Heart left ventricle (tissue), 16 donors: ENCODE measurements at regions of chr18 and their contacts with region 1.

Region 1: GRCh38 chr18:37537868-37538525 is 27.6 kb downstream of the CELF4 start:
- DNase-seq: peak; percentile 69 to 86 (median 76)
- ATAC-seq: peak; percentile 71 to 89 (median 76)
- H3K4me3 ChIP-seq: no peak overlapping the region
- H3K27ac ChIP-seq: no peak overlapping the region
- H3K4me1 ChIP-seq: peaks cover 0 to 6% (median 0%) of the 10 kb centered on the region in 12 donors
- H3K27me3 ChIP-seq: peaks cover 2 to 67% (median 18%) of the 10 kb centered on the region in 9 donors
- CTCF ChIP-seq: peak; percentile 74 to 90 (median 84)
- POLR2A ChIP-seq: no peak

Region 2: DNA sequence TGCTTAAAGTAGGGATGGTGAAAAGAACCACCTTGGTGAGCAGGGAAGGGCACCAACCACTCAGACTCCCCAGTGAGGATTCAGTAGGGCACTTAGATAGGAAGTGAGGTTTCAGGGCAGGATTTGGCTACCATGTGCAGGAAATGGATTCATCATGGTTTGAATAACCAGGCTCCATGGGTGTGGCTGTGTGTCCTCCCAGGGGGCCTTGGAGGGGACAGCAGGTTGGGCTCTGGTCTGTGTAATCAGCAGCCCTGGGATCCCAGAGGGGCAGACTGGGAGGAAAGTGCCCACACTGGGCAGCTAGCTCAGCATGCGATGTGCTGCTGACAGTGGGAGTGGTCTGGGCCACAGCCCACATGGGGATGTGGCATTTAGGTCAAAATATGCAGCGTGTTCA is 197.0 kb before region 1 on chr18:
- intact Hi-C with region 1: loop called in 6 of 10 experiments (anchors 1 to 10 kb)
- DNase-seq: no peak
- ATAC-seq: no peak
- H3K4me3 ChIP-seq: no peak overlapping the region
- H3K27ac ChIP-seq: no peak overlapping the region
- H3K4me1 ChIP-seq: no peaks in the 10 kb centered on the region
- H3K27me3 ChIP-seq: peaks cover 0 to 26% (median 0%) of the 10 kb centered on the region in 9 donors
- CTCF ChIP-seq: no peak
- POLR2A ChIP-seq: no peak

Region 3: DNA sequence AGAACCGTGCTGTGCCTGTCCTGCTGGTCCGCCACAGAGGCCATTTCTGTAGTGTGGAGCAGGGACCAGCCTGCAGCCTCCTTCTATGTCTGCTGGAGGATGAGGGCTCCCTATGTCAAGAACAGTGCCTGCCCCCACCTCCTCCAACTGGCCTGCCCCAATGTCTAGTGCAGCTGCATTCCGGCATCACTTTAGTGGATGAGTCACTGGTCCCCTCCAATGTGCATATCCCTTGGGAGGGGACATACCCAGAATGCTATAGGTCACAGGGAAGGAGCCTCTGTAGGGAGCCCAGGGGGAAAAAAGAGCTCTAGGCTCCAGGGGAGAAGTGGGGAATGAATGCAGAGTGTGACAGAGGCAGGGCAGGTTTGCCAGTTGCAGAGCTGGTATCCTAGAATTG is 191.9 kb before region 1 on chr18:
- intact Hi-C with region 1: loop called in 6 of 10 experiments (anchors 1 to 10 kb)
- DNase-seq: no peak
- ATAC-seq: no peak
- H3K4me3 ChIP-seq: no peak overlapping the region
- H3K27ac ChIP-seq: no peak overlapping the region
- H3K4me1 ChIP-seq: no peaks in the 10 kb centered on the region
- H3K27me3 ChIP-seq: peaks cover 0 to 39% (median 0%) of the 10 kb centered on the region in 9 donors
- CTCF ChIP-seq: no peak
- POLR2A ChIP-seq: no peak

Region 4: DNA sequence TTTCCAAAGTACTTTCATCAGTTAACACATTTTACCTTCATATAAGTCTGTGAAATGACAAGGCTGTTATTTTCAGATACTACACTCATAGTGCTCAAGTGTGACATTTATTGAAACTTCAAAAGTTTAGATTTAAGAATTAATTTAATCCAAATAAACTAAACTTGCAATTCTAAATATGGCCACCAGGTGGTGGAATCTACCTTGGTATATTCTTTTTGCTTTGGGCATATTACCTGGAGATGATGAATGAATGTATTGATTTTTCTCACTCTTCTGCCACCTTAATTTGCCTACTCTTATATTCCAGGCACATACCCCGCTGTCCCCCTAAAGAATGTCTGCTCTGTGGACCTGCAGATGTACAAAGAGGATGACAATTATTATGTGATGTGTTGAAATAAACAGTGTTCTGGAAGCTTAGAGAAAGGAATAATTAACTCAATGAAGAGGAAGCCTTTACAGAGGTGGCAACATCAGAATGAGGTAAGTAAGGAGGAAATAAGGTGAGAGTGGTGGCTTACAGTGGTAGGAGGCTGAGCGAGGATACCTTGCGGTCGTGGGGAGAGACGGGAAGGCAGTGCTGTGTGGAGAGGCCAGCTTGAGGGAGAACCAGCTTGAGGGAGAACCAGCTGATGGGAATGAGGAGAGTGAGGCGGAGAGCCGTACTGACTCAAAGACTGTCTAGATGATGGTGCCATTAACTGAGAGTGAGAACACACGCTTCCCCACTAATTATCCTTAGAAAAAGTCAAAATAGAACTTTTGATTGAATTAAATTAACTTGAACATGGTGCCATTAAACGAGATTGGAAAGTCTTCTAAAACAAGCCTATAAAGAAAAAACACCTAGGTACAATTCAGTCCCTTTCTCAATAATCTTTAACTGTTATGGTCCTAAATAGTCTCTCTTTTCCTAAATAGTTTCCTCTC is 151.9 kb before region 1 on chr18:
- intact Hi-C with region 1: loop called (anchors 1 to 5 kb)
- DNase-seq: no peak
- ATAC-seq: no peak
- H3K4me3 ChIP-seq: no peak overlapping the region
- H3K27ac ChIP-seq: no peak overlapping the region
- H3K4me1 ChIP-seq: no peaks in the 10 kb centered on the region
- H3K27me3 ChIP-seq: peaks cover 0 to 20% (median 0%) of the 10 kb centered on the region in 9 donors
- CTCF ChIP-seq: peak; percentile 60 to 97 (median 75)
- POLR2A ChIP-seq: no peak

Region 5: GRCh38 chr18:37435996-37436395 is 102.0 kb before region 1 on chr18:
- intact Hi-C with region 1: loop called in 5 of 10 experiments (anchors 5 kb)
- DNase-seq: no peak
- ATAC-seq: peak in 3 of 4 donors; percentile 37 to 73 (median 71)
- H3K4me3 ChIP-seq: no peak overlapping the region
- H3K27ac ChIP-seq: no peak overlapping the region
- H3K4me1 ChIP-seq: peaks cover 0 to 16% (median 0%) of the 10 kb centered on the region in 12 donors
- H3K27me3 ChIP-seq: no peaks in the 10 kb centered on the region
- CTCF ChIP-seq: no peak
- POLR2A ChIP-seq: no peak

Region 6: GRCh38 chr18:37445368-37445767 is 92.6 kb before region 1 on chr18:
- intact Hi-C with region 1: loop called (anchors 2 to 5 kb)
- DNase-seq: no peak
- ATAC-seq: no peak
- H3K4me3 ChIP-seq: no peak overlapping the region
- H3K27ac ChIP-seq: no peak overlapping the region
- H3K4me1 ChIP-seq: peaks cover 0 to 1% (median 0%) of the 10 kb centered on the region in 12 donors
- H3K27me3 ChIP-seq: peaks cover 0 to 17% (median 0%) of the 10 kb centered on the region in 9 donors
- CTCF ChIP-seq: no peak
- POLR2A ChIP-seq: no peak

Region 7: DNA sequence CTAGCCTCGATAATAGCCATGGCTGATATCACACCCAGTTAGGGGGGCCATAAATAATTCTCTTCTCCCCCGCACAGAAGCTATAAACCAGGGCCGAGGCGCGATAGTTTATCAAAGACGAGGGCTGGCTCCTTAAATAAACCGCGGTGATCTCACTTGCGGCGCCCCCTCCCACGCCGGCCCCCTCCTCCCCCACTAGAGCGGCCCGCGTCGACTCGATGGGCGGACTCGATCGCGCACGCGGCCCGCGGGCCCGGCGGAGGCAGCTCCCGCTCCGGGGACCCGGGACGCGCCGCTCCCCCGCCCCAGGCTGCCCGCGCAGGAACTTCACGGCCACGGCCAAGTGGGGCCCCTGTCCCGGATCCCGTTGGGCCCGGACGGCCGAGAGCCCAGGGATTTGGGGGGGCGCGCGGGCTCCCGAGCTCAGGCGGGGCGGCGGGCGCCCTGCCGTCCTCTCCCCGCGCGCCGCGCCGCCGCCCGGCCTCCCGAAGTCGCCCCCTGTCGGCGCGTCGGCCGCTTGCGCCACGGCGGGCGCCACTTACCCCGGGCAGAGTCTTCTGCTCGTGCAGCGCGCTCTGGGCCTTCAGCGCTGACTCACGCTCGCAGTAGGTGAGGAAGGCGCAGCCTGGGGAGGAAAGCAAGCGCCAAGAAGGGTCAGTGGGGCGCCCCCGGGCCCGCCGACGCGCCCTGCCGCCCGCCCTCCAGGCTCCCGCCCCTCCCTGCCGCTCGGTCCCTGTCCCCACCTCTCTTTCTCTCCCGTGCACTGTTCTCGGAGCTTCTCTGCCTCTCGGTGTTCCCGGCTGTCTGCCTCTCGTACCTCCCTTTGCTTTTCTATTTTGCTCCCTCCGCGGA is 52.8 kb before region 1 on chr18:
- intact Hi-C with region 1: loop called in 1 of 10 experiments (anchors 10 kb)
- DNase-seq: no peak
- ATAC-seq: peak in 2 of 4 donors; percentile 35 to 56
- H3K4me3 ChIP-seq: peak overlapping the region in 1 of 12 donors; percentile 23
- H3K27ac ChIP-seq: no peak overlapping the region
- H3K4me1 ChIP-seq: peaks cover 0 to 12% (median 0%) of the 10 kb centered on the region in 12 donors
- H3K27me3 ChIP-seq: peaks cover 23 to 73% (median 43%) of the 10 kb centered on the region in 9 donors
- CTCF ChIP-seq: peak in 7 of 12 donors; percentile 10 to 49 (median 30)
- POLR2A ChIP-seq: no peak